ENCODE measurements at regions of chr7 and their contacts with region 1.

Region 1: DNA sequence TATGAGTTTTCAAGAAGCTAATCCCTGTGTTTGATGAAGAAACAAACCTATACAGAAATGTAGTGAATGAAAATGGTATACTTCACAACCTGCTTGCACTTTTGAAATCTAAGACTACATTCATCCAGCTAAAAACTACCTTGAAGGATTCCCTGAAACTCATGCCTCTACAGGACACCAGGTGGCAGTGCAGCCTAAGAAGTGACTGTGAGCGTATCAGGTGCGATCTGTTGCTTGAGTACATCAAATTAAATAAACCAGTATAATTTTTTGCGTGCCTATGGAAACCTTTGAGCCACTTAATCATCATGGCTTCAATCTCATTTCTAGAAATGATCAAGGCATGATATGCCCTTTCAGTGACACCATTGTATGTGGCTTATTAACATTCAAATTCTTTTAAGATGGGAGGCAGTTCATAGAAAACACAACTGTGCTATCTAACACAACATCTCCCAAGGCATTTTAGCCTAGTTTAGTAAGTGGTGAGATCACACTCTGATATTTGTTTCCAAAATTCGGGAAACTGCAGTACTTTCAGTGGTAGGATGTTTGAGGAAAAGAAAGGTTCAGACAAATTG is 57.4 kb downstream of the PPP1R17 start:
- DNase-seq: peak; percentile 65
- H3K4me3 ChIP-seq: no peak overlapping the region
- H3K27ac ChIP-seq: no peak overlapping the region
- H3K4me1 ChIP-seq: no peaks in the 10 kb centered on the region
- H3K27me3 ChIP-seq: peaks cover 9% of the 10 kb centered on the region
- CTCF ChIP-seq: peak; percentile 79 to 88 (median 83)
- EP300 ChIP-seq: no peak
- POLR2A ChIP-seq: no peak

Region 2: GRCh38 chr7:31134246-31135188 is 609.9 kb before region 1 on chr7:
- in situ Hi-C with region 1: loop called in 3 of 4 experiments (anchors 10 to 25 kb)
- intact Hi-C with region 1: loop called (anchors 10 kb)
- DNase-seq: peak; percentile 61
- H3K4me3 ChIP-seq: no peak overlapping the region
- H3K27ac ChIP-seq: no peak overlapping the region
- H3K4me1 ChIP-seq: peaks cover 0 to 7% (median 0%) of the 10 kb centered on the region in 4 donors
- H3K27me3 ChIP-seq: no peaks in the 10 kb centered on the region
- CTCF ChIP-seq: peak; percentile 65 to 75 (median 70)
- EP300 ChIP-seq: no peak
- POLR2A ChIP-seq: no peak

Region 3: GRCh38 chr7:32204361-32205018 is 460.1 kb after region 1 on chr7:
- in situ Hi-C with region 1: loop called (anchors 10 kb)
- intact Hi-C with region 1: loop called (anchors 10 kb)
- DNase-seq: peak; percentile 54
- H3K4me3 ChIP-seq: peak overlapping the region in 2 of 4 donors; percentile 8 to 29
- H3K27ac ChIP-seq: no peak overlapping the region
- H3K4me1 ChIP-seq: no peaks in the 10 kb centered on the region
- H3K27me3 ChIP-seq: no peaks in the 10 kb centered on the region
- CTCF ChIP-seq: peak; percentile 49 to 78 (median 60)
- EP300 ChIP-seq: no peak
- POLR2A ChIP-seq: no peak

Region 4: DNA sequence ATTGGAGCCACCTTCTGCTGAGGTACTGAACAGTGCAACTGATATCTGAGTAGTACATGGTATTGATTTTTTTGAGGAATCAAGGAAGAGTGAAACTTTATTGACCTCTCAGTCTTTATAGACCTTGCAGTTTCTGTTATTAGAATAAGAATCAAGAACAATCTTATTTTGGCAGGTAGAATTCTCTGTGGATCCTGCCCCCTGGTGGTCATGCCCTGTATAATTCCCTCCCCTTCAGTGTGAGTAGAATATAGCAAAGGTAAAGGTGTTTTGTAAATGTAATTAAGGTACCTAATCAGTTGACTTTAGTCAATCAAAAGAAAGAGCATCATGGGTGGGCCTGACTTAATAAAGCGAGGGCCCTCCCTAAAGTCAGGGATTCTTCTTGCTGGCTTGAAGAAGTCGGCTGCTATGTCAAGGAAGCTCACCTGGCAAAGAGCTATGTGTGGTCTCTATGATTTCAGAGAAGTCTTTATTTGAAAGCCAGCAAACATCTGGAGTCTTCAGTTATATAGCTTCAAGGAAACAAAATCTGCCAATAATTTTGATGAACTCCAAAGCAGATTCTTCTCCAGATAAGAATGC is 603.0 kb after region 1 on chr7:
- in situ Hi-C with region 1: loop called in 2 of 4 experiments (anchors 10 to 25 kb)
- intact Hi-C with region 1: loop called (anchors 10 kb)
- DNase-seq: no peak
- H3K4me3 ChIP-seq: no peak overlapping the region
- H3K27ac ChIP-seq: no peak overlapping the region
- H3K4me1 ChIP-seq: no peaks in the 10 kb centered on the region
- H3K27me3 ChIP-seq: no peaks in the 10 kb centered on the region
- CTCF ChIP-seq: peak; percentile 46 to 76 (median 60)
- EP300 ChIP-seq: no peak
- POLR2A ChIP-seq: no peak

Region 5: DNA sequence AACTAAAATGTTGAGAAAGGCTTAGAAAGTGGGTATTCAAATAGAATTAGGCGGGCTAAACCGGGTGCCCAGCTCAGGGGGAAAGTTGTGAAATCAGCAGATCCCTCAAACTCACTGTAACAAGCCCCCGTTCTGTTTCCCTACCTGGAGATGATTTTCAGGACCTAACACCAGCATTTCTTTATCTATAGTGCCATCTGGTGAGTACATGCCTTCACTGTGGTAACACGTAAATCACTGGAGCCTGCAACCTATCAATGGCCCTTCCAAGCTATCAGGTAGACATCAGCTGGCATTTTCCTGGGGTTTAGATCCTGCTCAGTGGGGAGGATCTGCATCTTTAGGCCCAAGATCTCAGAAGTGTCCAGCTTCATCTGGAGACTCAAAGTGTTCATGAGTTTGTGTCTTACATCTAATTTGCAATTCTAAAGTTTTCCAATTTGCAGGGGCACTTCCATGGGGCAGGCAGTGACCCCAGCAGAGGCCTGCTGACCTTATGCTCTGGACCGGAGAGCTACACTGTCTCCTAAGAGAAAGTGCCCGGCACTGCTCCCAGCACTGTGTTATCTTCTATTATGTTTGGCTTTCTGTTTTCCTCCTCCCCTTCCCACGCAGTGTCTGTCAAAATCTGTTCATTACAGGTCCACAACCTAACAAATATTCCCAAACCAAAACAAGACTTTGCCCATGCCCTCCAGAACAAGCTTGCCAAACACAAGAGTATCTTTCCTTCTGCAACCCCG is 613.3 kb after region 1 on chr7:
- in situ Hi-C with region 1: loop called in 1 of 4 experiments (anchors 10 kb)
- intact Hi-C with region 1: no loop called
- DNase-seq: no peak
- H3K4me3 ChIP-seq: no peak overlapping the region
- H3K27ac ChIP-seq: no peak overlapping the region
- H3K4me1 ChIP-seq: no peaks in the 10 kb centered on the region
- H3K27me3 ChIP-seq: no peaks in the 10 kb centered on the region
- CTCF ChIP-seq: no peak
- EP300 ChIP-seq: no peak
- POLR2A ChIP-seq: no peak